PC-3 (cell line): ENCODE measurements at regions of chr7 and their contacts with region 1.

Region 1: DNA sequence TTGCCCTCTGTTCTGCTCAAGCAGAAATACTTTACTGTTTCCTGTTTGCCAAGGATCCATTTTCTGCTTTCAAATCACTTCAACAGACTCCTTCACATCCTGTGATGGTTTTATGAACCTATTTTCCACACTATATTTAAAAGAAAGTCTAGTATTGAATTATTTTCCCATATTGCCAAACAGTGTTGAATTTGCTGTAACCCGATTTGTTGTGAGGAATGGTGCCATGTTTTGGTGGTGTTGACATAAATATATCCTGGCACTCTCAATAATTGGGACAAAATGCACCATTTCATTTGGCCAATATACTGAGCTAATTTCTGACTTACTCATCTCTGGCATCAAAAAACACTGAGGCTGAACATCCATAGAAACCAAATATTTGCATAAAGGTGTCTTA is 615.4 kb upstream of the SEMA3D start:
- DNase-seq: no peak
- ATAC-seq: no peak
- H3K4me3 ChIP-seq: no peak overlapping the region
- H3K27ac ChIP-seq: no peak overlapping the region
- H3K4me1 ChIP-seq: no peaks in the 10 kb centered on the region
- H3K27me3 ChIP-seq: no peaks in the 10 kb centered on the region
- CTCF ChIP-seq: no peak

Region 2: GRCh38 chr7:85261336-85261735 is 540.9 kb before region 1 on chr7:
- CTCF ChIA-PET with region 1: no interaction called
- POLR2A ChIA-PET with region 1: no interaction called
- intact Hi-C with region 1: no loop called
- DNase-seq: no peak
- ATAC-seq: no peak
- H3K4me3 ChIP-seq: no peak overlapping the region
- H3K27ac ChIP-seq: no peak overlapping the region
- H3K4me1 ChIP-seq: no peaks in the 10 kb centered on the region
- H3K27me3 ChIP-seq: no peaks in the 10 kb centered on the region
- CTCF ChIP-seq: no peak

Region 3: DNA sequence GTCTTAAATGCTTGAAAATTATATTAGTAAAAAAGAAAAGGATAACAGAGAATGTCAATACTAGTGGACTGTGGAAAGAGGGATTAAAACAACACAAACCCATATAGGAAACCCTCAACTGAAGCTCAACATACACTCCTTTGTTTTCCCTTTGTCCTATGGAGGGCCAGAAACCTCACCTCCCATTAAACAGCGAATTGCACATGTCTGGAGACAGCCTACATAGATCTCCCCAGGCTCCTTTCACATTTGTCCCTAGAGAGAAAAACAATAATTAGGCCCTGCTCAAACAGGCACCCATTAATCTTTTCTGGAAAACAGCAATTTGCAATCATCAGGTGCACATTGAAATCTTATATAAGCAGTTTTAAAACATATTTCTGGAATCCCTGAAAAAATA is 527.8 kb before region 1 on chr7:
- CTCF ChIA-PET with region 1: no interaction called
- POLR2A ChIA-PET with region 1: interaction called, 36 read pairs
- intact Hi-C with region 1: no loop called
- DNase-seq: no peak
- ATAC-seq: no peak
- H3K4me3 ChIP-seq: no peak overlapping the region
- H3K27ac ChIP-seq: no peak overlapping the region
- H3K4me1 ChIP-seq: no peaks in the 10 kb centered on the region
- H3K27me3 ChIP-seq: no peaks in the 10 kb centered on the region
- CTCF ChIP-seq: no peak

Region 4: GRCh38 chr7:86499986-86500385 is 697.8 kb after region 1 on chr7:
- CTCF ChIA-PET with region 1: no interaction called
- POLR2A ChIA-PET with region 1: no interaction called
- intact Hi-C with region 1: no loop called
- DNase-seq: no peak
- ATAC-seq: no peak
- H3K4me3 ChIP-seq: no peak overlapping the region
- H3K27ac ChIP-seq: no peak overlapping the region
- H3K4me1 ChIP-seq: peaks cover 11% of the 10 kb centered on the region
- H3K27me3 ChIP-seq: peaks cover 47% of the 10 kb centered on the region
- CTCF ChIP-seq: no peak